Aorta (tissue), 5 donors: ENCODE measurements at regions of chr19 and their contacts with region 1.

Region 1: GRCh38 chr19:54851353-54851752 is 1.1 kb downstream of the KIR3DL2 start:
- DNase-seq: no peak
- ATAC-seq: no peak
- H3K4me3 ChIP-seq: no peak overlapping the region
- H3K27ac ChIP-seq: no peak overlapping the region
- H3K4me1 ChIP-seq: no peaks in the 10 kb centered on the region
- H3K27me3 ChIP-seq: no peaks in the 10 kb centered on the region

Region 2: DNA sequence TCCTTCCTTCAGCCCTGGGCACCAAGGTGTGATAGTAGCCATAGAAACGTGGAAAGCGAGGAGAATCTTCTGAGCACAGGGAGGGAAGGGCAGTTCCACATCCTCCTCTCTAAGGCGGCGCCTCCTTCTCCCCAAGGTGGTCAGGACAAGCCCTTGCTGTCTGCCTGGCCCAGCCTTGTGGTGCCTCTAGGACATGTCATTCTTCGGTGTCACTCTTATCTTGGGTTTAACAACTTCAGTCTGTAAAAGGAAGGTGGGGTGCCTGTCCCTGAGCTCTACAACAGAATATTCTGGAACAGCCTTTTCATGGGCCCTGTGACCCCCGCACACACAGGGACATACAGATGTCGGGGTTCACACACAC is 111.2 kb before region 1 on chr19:
- intact Hi-C with region 1: loop called in 1 of 2 experiments (anchors 1 kb)
- DNase-seq: no peak
- ATAC-seq: no peak
- H3K4me3 ChIP-seq: no peak overlapping the region
- H3K27ac ChIP-seq: no peak overlapping the region
- H3K4me1 ChIP-seq: no peaks in the 10 kb centered on the region
- H3K27me3 ChIP-seq: no peaks in the 10 kb centered on the region

Region 3: GRCh38 chr19:54817670-54818536 is 33.5 kb before region 1 on chr19:
- intact Hi-C with region 1: no loop called
- DNase-seq: no peak
- ATAC-seq: no peak
- H3K4me3 ChIP-seq: no peak overlapping the region
- H3K27ac ChIP-seq: no peak overlapping the region
- H3K4me1 ChIP-seq: no peaks in the 10 kb centered on the region
- H3K27me3 ChIP-seq: no peaks in the 10 kb centered on the region